ENCODE measurements at regions of chr5 and their contacts with region 1.

Region 1: DNA sequence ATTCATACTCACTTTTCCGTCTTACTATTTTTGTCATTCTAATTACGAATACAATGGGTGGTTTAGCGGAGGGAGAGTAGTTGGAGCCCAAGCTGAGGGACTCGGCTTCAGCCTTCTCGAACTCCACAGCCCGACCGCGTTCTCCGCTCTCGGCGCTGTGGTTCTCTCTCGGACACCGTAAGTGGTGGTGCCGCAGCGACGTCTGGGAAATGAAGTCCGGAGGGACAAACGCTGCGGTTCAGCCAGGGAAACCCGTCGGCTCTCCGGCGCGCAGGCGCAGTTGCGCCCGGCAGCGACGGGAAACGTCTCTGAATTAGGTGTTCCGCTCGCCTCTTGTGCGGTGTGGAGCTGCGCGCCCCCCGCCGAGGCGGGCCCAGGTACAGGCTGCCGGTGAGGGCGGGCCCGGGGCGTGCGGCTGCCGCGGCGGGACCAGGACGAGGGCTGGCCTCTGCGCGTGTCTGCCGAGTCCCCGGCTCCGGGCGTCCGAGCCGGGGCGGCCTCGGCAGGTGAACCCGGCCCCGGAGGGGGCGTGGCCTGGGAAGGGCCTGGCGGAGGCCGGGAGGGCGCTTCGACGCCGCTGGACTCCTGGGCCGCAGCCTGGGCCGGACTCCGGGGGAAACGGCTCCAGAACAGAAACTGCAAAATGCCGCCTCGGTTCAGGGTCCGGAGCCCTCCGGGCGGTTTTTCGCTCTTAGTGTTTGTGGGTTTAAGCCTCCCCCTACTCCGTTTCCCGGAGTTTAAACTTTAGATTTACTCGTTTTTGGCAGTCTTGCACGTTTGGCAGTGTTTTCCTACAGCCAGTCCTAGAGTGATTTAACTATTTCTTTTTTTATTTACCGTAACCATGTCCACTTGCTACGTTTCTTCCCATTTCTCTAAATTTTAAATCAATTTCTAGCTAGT is at the start of gene ZNF879:
- DNase-seq: peak; percentile 89 to 96 (median 92)
- ATAC-seq: peak; percentile 93 to 97 (median 95)
- H3K4me3 ChIP-seq: peak within 1 kb of the TSS; percentile 61 to 76
- H3K4me3 Mint-ChIP-seq: peak within 1 kb of the TSS; percentile 87 to 95 (median 92)
- H3K27ac ChIP-seq: peak within 1 kb of the TSS; percentile 28
- H3K27ac Mint-ChIP-seq: peak within 1 kb of the TSS; percentile 84 to 90
- H3K4me1 ChIP-seq: peaks cover 2 to 17% of the 10 kb centered on the region in 2 experiments
- H3K4me1 Mint-ChIP-seq: peaks cover 12 to 17% (median 13%) of the 10 kb centered on the region in 3 donors
- H3K27me3 ChIP-seq: peaks cover 0 to 3% of the 10 kb centered on the region in 2 experiments
- H3K27me3 Mint-ChIP-seq: no peaks in the 10 kb centered on the region
- total RNA-seq, gene ZNF879: 6.5 to 15.2 (median 10.7) TPM

Region 2: GRCh38 chr5:179065703-179066102 is 41.9 kb after region 1 on chr5:
- CTCF ChIA-PET with region 1: no interaction called
- POLR2A ChIA-PET with region 1: interaction called in 1 of 2 experiments, 16 read pairs
- DNase-seq: no peak
- ATAC-seq: no peak
- H3K4me3 ChIP-seq: peak overlapping the region in 1 of 2 donors; percentile 10
- H3K4me3 Mint-ChIP-seq: no peak overlapping the region
- H3K27ac ChIP-seq: no peak overlapping the region
- H3K27ac Mint-ChIP-seq: no peak overlapping the region
- H3K4me1 ChIP-seq: peaks cover 8 to 10% of the 10 kb centered on the region in 2 experiments
- H3K4me1 Mint-ChIP-seq: peaks cover 19 to 31% (median 20%) of the 10 kb centered on the region in 3 donors
- H3K27me3 ChIP-seq: no peaks in the 10 kb centered on the region
- H3K27me3 Mint-ChIP-seq: no peaks in the 10 kb centered on the region

Region 3: DNA sequence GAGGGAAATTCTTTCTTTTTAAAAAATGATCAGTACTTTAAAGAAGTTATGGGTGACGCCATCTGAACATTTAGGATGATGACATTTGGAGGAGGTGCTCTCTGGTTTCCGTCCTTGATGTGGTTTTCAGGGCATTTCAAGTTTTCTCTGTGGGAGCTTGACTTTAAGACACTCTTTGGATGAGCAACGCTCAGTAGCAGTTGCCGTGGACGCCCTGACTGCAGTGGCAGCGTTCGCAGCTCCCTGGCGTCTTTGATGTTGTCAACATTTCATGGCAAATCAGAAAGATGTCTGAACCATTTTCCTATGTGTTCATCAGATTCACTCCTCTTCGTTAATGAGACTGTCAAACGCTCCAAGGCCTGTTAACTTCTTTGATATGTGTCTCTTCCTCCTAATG is 122.5 kb after region 1 on chr5:
- CTCF ChIA-PET with region 1: no interaction called
- POLR2A ChIA-PET with region 1: no interaction called
- DNase-seq: peak in 11 of 35 experiments; percentile 8 to 39 (median 21)
- ATAC-seq: peak; percentile 31 to 93 (median 50)
- H3K4me3 ChIP-seq: no peak overlapping the region
- H3K4me3 Mint-ChIP-seq: peak overlapping the region in 2 of 3 donors; percentile 28 to 32
- H3K27ac ChIP-seq: no peak overlapping the region
- H3K27ac Mint-ChIP-seq: peak overlapping the region in 1 of 2 donors; percentile 66
- H3K4me1 ChIP-seq: peaks cover 0 to 3% of the 10 kb centered on the region in 2 experiments
- H3K4me1 Mint-ChIP-seq: peaks cover 14 to 19% (median 18%) of the 10 kb centered on the region in 3 donors
- H3K27me3 ChIP-seq: peaks cover 0 to 12% of the 10 kb centered on the region in 2 experiments
- H3K27me3 Mint-ChIP-seq: no peaks in the 10 kb centered on the region

Region 4: GRCh38 chr5:179284751-179285631 is 261.2 kb after region 1 on chr5:
- CTCF ChIA-PET with region 1: no interaction called
- POLR2A ChIA-PET with region 1: no interaction called
- DNase-seq: no peak
- ATAC-seq: no peak
- H3K4me3 ChIP-seq: no peak overlapping the region
- H3K4me3 Mint-ChIP-seq: no peak overlapping the region
- H3K27ac ChIP-seq: no peak overlapping the region
- H3K27ac Mint-ChIP-seq: no peak overlapping the region
- H3K4me1 ChIP-seq: no peaks in the 10 kb centered on the region
- H3K4me1 Mint-ChIP-seq: no peaks in the 10 kb centered on the region
- H3K27me3 ChIP-seq: peaks cover 0 to 14% of the 10 kb centered on the region in 2 experiments
- H3K27me3 Mint-ChIP-seq: peaks cover 0 to 4% of the 10 kb centered on the region in 2 donors

Measured in T-cell (primary cell).